BJ (cell line): ENCODE measurements at regions of chr17 and their contacts with region 1.

Region 1: GRCh38 chr17:28494445-28495188 is 11.5 kb upstream of the FOXN1 start:
- DNase-seq: no peak
- H3K4me3 ChIP-seq: no peak overlapping the region
- H3K27me3 ChIP-seq: peaks cover 15% of the 10 kb centered on the region
- CTCF ChIP-seq: peak; percentile 93

Region 2: GRCh38 chr17:28338054-28338768 is 156.4 kb before region 1 on chr17:
- CTCF ChIA-PET with region 1: no interaction called
- POLR2A ChIA-PET with region 1: no interaction called
- DNase-seq: no peak
- H3K4me3 ChIP-seq: no peak overlapping the region
- H3K27me3 ChIP-seq: no peaks in the 10 kb centered on the region
- CTCF ChIP-seq: no peak

Region 3: GRCh38 chr17:28484296-28484695 is 10.3 kb before region 1 on chr17:
- CTCF ChIA-PET with region 1: interaction called, 23 read pairs
- POLR2A ChIA-PET with region 1: no interaction called
- DNase-seq: no peak
- H3K4me3 ChIP-seq: no peak overlapping the region
- H3K27me3 ChIP-seq: peaks cover 19% of the 10 kb centered on the region
- CTCF ChIP-seq: no peak

Region 4: DNA sequence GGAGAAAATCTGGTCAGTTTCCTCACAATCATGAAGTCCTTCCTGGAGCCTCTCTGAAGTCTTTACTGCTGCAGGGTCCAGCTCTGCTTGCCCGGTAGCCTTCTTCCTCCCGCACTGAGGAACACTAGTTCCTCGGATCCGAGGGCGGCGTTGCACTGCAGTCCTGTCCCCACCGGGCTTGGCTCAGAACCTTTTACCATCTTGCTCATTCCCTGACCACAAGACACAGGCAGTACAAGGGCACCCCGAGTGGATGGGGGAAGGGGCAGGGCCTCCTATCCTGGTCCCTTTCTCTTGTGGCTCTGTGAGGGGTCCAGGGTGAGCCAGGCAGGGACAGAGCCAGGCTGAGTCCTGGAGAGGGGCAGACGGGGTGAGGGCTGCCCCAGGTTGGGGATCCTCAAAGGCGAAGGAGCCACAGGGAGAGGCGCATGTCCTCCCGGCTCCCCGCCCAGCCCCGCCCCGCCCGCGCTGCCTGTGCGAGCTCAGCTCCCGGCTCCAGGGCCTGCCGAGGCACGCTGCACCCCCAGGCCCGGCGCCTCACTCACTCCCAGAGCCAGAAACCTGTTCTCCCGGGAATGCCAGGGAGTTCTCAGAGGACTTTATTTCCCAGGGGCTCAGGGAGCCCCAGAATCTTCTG is 13.1 kb after region 1 on chr17:
- CTCF ChIA-PET with region 1: interaction called, 48 read pairs
- POLR2A ChIA-PET with region 1: no interaction called
- DNase-seq: no peak
- H3K4me3 ChIP-seq: no peak overlapping the region
- H3K27me3 ChIP-seq: peaks cover 48% of the 10 kb centered on the region
- CTCF ChIP-seq: no peak

Region 5: GRCh38 chr17:28540231-28540630 is 45.6 kb after region 1 on chr17:
- CTCF ChIA-PET with region 1: interaction called, 155 read pairs
- POLR2A ChIA-PET with region 1: no interaction called
- DNase-seq: no peak
- H3K4me3 ChIP-seq: no peak overlapping the region
- H3K27me3 ChIP-seq: peaks cover 2% of the 10 kb centered on the region
- CTCF ChIP-seq: no peak

Region 6: DNA sequence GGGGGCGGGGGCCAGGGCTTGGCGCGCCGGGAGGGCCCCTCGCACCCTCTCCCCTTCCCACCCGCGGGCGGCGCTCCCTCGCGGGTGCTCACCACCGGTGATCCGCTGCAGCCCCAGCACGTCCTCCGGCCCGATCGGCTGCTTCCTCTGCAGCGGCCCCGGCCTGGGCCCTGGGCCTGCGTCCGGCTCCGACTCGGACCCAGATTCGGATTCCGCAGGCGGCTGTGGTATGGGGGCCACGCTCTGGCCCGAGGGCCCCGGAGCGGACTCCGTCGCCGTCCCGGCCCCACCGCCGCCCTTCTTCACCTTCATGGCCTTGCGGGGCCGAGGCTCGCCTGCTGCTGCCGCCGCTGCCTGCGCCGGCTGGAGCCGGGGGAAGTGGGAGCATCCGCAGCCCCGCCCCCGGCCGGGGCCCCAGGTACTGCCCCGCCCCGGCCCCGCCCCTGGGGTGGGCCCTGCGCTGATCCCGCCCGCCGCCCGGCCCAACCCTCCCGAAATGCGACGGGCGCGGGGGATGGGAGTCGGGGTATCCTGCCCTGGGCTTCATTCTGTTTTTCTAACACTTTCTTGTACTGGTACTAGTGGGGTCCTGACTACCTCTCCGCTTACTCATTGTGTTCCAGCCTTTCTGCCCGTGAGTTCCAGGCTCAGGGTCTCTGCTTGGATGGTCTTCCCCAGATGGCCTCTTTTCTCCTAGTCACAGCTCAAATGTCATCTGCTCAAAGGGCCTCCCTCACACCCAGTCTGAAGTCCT is 57.8 kb after region 1 on chr17 and contains the start of gene UNC119:
- CTCF ChIA-PET with region 1: interaction called, 45 read pairs
- POLR2A ChIA-PET with region 1: no interaction called
- DNase-seq: no peak
- H3K4me3 ChIP-seq: peak within 1 kb of the TSS; percentile 55
- H3K27me3 ChIP-seq: no peaks in the 10 kb centered on the region
- CTCF ChIP-seq: no peak
- polyA plus RNA-seq, gene UNC119: 82.8 and 150 TPM in 2 replicates

Region 7: DNA sequence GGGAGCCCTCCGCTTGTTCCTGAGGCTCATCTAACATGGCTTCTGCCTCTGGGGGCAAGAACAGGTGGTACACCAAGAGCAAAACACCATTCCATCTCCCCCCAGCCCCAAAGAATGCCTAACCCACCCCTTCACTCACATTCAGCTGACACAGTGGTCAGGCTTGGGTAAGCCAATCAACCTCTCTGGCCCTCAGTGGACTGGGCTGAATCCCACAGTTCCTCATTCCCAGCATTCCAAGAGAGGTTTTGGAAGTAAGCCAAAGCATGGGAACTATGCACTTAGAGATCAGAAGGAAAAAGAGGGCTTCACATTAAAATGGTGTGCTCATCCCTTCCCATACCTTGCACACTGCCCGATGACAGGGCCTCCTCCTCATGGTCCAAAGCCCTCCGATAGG is 68.9 kb after region 1 on chr17:
- CTCF ChIA-PET with region 1: no interaction called
- POLR2A ChIA-PET with region 1: no interaction called
- DNase-seq: peak; percentile 28
- H3K4me3 ChIP-seq: no peak overlapping the region
- H3K27me3 ChIP-seq: no peaks in the 10 kb centered on the region
- CTCF ChIP-seq: no peak

Region 8: DNA sequence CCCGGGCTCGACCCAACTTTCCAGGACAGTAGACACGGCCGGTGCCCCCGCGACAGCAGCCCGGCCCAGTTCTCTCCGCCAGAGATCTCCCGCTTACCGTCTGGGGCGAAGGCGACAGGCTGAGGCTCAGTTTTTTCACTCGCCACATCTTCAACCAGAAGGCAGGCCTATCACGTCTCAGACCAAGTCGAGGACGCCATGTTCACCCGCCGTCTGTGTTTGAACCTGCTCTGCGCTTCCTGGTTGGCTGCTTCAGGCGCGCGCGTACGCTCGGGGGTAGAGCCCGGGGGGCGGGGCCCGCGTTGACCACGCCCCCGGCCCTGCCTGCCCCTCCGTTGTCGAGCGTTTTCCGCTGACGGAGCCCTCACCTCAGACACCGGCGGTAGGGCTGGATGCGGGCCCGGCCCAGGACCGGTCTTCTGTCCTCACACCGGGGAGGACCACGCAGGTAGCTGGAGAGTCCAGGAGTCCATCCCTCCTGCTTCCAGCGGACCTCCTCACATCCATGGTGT is 104.2 kb after region 1 on chr17 and contains the start of gene SPAG5:
- CTCF ChIA-PET with region 1: no interaction called
- POLR2A ChIA-PET with region 1: interaction called, 16 read pairs
- DNase-seq: peak; percentile 57
- H3K4me3 ChIP-seq: peak within 1 kb of the TSS; percentile 65
- H3K27me3 ChIP-seq: no peaks in the 10 kb centered on the region
- CTCF ChIP-seq: no peak
- polyA plus RNA-seq, gene SPAG5: 36.1 and 41.3 TPM in 2 replicates

Region 9: DNA sequence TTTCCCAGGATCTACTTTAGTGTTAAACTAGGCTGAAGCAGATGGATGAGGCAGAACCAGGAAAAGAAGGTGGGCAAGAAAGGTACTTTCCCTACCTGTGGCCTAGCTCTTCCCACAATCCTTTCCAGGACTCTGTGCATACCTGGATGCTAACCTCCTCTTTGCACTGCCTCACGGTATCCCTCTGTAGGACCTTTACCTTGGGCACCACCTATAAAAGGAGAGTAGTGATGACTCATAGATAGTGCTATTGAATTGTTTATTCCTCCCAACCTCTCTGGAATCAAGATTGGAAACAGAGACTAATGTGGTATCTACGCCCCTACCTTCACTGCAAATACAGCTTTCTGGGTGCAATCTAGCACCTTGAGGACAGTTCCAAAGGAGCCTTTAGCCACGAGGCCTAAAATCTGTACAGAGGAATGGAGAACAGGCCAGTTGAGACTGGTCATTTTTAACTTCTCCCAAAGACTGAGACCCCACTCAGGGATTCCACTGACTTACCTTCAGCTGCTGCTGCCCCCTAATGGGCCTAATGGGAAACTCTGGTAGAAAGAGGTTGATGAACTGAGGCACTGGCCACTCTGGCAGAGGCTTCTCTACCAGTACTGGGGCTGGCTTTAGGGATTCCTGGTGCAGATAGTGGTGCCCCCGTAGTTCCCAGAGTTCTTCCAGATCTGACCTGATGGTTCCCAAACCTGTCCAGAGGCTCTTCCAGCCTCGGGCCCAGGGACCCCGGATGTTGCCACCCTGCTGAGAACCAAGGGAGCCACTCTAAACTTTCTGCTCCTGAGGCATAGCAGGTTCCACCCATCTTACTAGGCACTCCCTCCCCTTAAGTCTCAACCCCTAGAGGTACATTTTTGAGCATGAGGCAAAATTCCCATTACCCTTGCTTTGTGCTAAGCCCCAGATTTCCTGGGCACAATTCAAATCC is 118.6 kb after region 1 on chr17:
- CTCF ChIA-PET with region 1: interaction called, 20 read pairs
- POLR2A ChIA-PET with region 1: no interaction called
- DNase-seq: no peak
- H3K4me3 ChIP-seq: no peak overlapping the region
- H3K27me3 ChIP-seq: no peaks in the 10 kb centered on the region
- CTCF ChIP-seq: peak; percentile 76